A673 (cell line): ENCODE measurements at regions of chr10 and their contacts with region 1.

Region 1: GRCh38 chr10:97463363-97464132 is 17.6 kb downstream of the ZDHHC16 start:
- DNase-seq: peak; percentile 57
- H3K4me3 ChIP-seq: no peak overlapping the region
- H3K27ac ChIP-seq: no peak overlapping the region
- H3K4me1 ChIP-seq: no peaks in the 10 kb centered on the region
- H3K27me3 ChIP-seq: no peaks in the 10 kb centered on the region
- CTCF ChIP-seq: peak; percentile 84

Region 2: GRCh38 chr10:97475936-97476594 is 12.5 kb after region 1 on chr10:
- CTCF ChIA-PET with region 1: interaction called, 3 read pairs
- POLR2A ChIA-PET with region 1: interaction called, 12 read pairs
- intact Hi-C with region 1: no loop called
- DNase-seq: no peak
- H3K4me3 ChIP-seq: no peak overlapping the region
- H3K27ac ChIP-seq: no peak overlapping the region
- H3K4me1 ChIP-seq: no peaks in the 10 kb centered on the region
- H3K27me3 ChIP-seq: no peaks in the 10 kb centered on the region
- CTCF ChIP-seq: no peak

Region 3: DNA sequence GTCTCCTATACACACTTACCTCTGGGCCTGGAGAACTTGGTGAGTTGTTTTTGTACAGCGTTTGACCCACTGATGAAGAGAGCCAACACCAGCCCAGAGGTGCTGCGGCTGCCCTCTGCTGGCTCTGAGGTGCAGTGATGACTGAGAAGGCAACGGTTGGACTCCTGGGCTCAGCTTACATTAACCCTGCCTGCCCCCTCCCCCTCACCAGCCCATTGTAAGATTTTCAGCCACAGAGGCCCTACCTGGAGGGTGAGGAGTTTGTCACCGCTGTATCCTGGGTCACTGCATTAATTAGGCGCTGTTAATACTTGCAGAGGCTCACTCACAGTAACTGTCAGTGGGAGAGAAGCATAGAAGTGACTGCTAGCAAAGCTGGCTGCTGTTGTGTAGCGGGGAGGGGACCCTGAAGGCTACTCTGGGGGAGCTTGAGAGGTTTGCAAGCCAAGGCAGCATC is 90.1 kb after region 1 on chr10:
- CTCF ChIA-PET with region 1: interaction called, 6 read pairs
- POLR2A ChIA-PET with region 1: no interaction called
- intact Hi-C with region 1: loop called (anchors 1 kb)
- DNase-seq: peak; percentile 70
- H3K4me3 ChIP-seq: no peak overlapping the region
- H3K27ac ChIP-seq: no peak overlapping the region
- H3K4me1 ChIP-seq: no peaks in the 10 kb centered on the region
- H3K27me3 ChIP-seq: no peaks in the 10 kb centered on the region
- CTCF ChIP-seq: peak; percentile 90